Common myeloid progenitor, CD34-positive (primary cell): ENCODE measurements at regions of chr11 and their contacts with region 1.

Region 1: DNA sequence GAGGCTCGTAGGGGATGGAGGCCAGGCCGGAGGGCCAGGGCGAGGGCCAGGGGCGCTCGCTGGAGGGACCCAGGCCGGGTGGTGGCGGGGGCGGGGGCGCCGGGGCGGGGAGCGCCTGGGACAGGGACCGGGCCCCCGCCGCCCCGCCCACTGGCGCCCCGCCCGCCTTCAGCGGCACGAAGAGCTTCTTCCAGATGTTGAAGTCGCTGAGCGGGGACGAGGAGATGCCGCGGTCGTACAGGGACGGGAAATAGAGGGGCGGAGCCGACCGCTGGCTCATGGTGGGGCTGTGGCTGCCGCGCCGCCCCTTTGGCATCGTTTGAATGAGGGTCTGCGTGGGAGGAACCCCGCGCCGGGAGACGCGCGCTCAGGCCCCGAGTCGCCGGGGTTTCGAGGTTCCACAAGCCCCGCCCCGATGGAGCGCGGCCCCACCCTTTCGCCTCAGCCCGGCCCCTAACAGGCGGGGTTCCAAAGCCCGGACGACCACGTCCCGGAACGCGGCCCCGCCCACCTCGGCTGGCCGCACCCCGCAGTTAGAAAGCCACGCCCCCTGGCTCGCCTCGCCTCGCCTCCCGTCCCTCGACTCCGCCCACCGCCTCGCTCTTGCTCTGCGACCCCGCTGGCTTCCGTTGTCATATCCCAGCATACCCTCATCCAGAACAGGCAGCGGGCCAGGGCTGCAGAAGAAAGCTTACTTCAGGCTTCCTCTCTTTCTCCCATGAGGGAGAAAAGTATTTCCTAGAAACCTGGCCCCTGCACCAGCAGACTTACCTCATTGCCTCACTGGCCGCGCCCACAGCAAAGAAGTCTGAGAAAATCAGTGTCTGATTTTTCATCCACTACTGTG is at the start of gene C11orf91:
- DNase-seq: peak; percentile 89 to 94 (median 93)
- H3K4me3 ChIP-seq: peak within 1 kb of the TSS; percentile 52 to 80 (median 71)
- H3K27ac ChIP-seq: no peak within 1 kb of the TSS
- H3K4me1 ChIP-seq: peaks cover 10 to 29% (median 23%) of the 10 kb centered on the region in 4 experiments
- H3K27me3 ChIP-seq: peaks cover 0 to 5% (median 3%) of the 10 kb centered on the region in 5 experiments

Region 2: GRCh38 chr11:33722579-33723225 is 22.1 kb after region 1 on chr11:
- CTCF ChIA-PET with region 1: interaction called, 105 read pairs
- POLR2A ChIA-PET with region 1: no interaction called
- DNase-seq: no peak
- H3K4me3 ChIP-seq: no peak overlapping the region
- H3K27ac ChIP-seq: peak overlapping the region in 1 of 2 experiments; percentile 28
- H3K4me1 ChIP-seq: peaks cover 5 to 48% (median 31%) of the 10 kb centered on the region in 4 experiments
- H3K27me3 ChIP-seq: no peaks in the 10 kb centered on the region

Region 3: GRCh38 chr11:33808228-33808828 is 107.7 kb after region 1 on chr11:
- CTCF ChIA-PET with region 1: no interaction called
- POLR2A ChIA-PET with region 1: no interaction called
- DNase-seq: peak; percentile 85 to 92 (median 86)
- H3K4me3 ChIP-seq: no peak overlapping the region
- H3K27ac ChIP-seq: no peak overlapping the region
- H3K4me1 ChIP-seq: no peaks in the 10 kb centered on the region
- H3K27me3 ChIP-seq: peaks cover 0 to 8% (median 4%) of the 10 kb centered on the region in 5 experiments